Psoas muscle (tissue), 8 donors: ENCODE measurements at regions of chr7 and their contacts with region 1.

Region 1: DNA sequence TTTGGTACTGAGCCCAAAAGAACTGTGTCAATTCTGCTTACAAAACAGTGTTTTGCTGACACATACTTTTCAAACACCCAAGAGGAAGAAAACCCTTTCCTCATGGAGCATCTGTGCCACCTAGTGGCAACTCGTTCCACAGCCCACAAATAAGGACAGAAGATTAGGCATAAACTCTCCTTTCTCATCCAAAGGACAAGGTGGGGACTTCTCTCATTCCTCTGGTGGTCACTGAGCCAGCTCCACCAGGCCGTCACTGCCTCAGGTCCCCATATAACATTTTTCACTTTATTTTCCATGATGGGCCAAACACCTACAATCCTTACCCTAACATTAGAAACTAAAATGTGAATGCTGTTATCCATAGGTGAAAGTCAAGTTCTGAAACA is 76.9 kb downstream of the RNF216 start:
- DNase-seq: peak; percentile 74 to 77
- ATAC-seq: peak; percentile 85 to 97 (median 91)
- H3K4me3 ChIP-seq: peak overlapping the region; percentile 23
- H3K27ac ChIP-seq: peak overlapping the region; percentile 57
- H3K4me1 ChIP-seq: peaks cover 27% of the 10 kb centered on the region
- H3K27me3 ChIP-seq: no peaks in the 10 kb centered on the region
- CTCF ChIP-seq: peak; percentile 95

Region 2: GRCh38 chr7:5629941-5630340 is 74.6 kb before region 1 on chr7:
- intact Hi-C with region 1: no loop called
- DNase-seq: peak; percentile 37 to 40
- ATAC-seq: peak in 1 of 4 donors; percentile 30
- H3K4me3 ChIP-seq: no peak overlapping the region
- H3K27ac ChIP-seq: no peak overlapping the region
- H3K4me1 ChIP-seq: peaks cover 23% of the 10 kb centered on the region
- H3K27me3 ChIP-seq: no peaks in the 10 kb centered on the region
- CTCF ChIP-seq: no peak

Region 3: DNA sequence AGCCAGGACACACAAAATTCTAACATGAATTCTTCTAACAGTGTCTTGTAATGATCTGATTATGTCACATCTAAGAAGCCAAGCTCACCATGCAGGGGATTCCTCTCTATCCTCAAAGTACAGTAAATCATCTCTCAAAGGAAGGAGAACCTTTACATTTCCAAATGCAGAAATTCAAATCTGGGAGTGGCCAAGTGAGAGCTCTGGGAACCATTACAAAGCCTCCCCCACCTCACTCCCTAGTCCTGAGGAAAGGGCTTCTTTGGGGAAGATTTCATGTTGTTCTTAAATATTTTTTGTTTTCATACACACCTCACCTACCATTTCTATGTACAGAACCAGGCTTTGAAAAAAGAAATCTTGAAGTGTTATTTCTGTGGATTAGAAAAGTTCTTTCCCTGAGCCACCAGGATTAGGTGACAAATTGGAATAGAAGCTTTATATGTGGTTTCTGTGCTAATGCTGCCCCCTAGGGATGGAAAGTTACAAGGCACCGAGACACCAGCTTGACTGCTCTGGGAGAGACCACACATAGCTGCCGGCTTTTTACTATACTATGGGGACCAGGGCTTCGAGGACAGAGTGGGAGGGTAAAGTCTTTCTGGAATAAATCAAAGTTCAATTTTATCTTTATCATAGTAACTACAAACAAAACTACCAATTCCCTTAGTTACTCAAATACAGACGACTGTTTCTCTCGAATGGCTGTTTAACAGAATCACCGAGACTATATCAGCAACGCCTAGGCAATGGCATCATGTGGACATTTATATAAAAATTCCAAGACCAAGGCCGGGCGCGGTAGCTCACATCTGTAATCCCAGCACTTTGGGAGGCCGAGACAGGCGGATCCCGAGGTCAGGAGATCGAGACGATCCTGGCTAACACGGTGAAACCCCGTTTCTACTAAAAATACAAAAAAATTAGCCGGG is 39.2 kb before region 1 on chr7:
- intact Hi-C with region 1: loop called (anchors 2 to 5 kb)
- DNase-seq: peak; percentile 57 to 60
- ATAC-seq: peak; percentile 77 to 92 (median 82)
- H3K4me3 ChIP-seq: no peak overlapping the region
- H3K27ac ChIP-seq: no peak overlapping the region
- H3K4me1 ChIP-seq: peaks cover 12% of the 10 kb centered on the region
- H3K27me3 ChIP-seq: no peaks in the 10 kb centered on the region
- CTCF ChIP-seq: peak; percentile 83

Region 4: GRCh38 chr7:6505685-6506574 is 801.4 kb after region 1 on chr7:
- intact Hi-C with region 1: no loop called
- DNase-seq: no peak
- ATAC-seq: no peak
- H3K4me3 ChIP-seq: no peak overlapping the region
- H3K27ac ChIP-seq: no peak overlapping the region
- H3K4me1 ChIP-seq: peaks cover 9% of the 10 kb centered on the region
- H3K27me3 ChIP-seq: no peaks in the 10 kb centered on the region
- CTCF ChIP-seq: no peak